Activated CD4-positive, alpha-beta memory T cell treated with anti-CD3 and anti-CD28 coated beads, Interleukin-2, amount 10 ng/mL, durations not matched to agents 7 days and 5 days (primary cell): ENCODE measurements at regions of chr10 and their contacts with region 1.

Region 1: DNA sequence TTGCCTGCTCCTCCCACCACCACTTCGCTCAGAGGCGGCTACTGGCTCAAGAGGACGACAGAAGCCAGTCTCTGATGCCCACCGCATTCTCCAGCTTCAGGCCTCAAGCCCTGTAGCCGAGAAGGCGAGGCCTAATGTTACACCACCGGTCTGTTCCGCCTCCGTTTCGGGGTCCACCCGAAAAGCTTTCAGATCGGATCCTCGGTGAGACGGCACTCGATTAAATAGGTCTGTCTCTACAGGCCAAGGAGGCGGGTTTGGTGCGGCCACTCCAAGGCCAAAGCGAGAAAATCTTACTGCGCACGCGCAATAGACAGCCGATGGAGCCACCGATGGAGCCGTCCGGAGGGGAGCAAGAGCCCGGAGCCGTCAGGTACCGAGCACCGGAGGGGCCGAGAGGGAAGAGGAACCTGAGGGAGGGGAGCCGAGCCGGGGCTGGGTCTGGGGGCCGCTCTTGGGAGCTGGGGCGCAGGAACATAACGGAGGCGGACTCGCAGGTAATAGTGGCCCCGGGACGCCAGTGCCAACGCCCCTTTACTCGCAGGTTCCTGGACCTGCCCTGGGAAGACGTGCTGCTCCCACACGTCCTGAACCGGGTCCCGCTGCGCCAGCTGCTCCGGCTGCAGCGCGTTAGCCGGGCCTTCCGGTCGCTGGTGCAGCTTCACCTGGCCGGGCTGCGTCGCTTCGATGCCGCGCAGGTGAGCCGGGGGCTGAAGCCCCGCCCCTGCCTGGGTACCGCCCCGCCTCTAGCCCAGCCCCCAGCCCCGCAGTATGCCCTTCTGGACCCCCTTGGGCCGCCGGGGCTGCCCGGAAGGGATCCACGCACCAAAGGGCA is at the start of gene FBXL15:
- DNase-seq: peak; percentile 97
- H3K4me3 Mint-ChIP-seq: peak within 1 kb of the TSS; percentile 87
- H3K27ac Mint-ChIP-seq: peak within 1 kb of the TSS; percentile 90
- H3K4me1 Mint-ChIP-seq: peaks cover 40% of the 10 kb centered on the region
- H3K27me3 Mint-ChIP-seq: peaks cover 18% of the 10 kb centered on the region
- total RNA-seq, gene FBXL15: 13.5 to 14.3 TPM

Region 2: DNA sequence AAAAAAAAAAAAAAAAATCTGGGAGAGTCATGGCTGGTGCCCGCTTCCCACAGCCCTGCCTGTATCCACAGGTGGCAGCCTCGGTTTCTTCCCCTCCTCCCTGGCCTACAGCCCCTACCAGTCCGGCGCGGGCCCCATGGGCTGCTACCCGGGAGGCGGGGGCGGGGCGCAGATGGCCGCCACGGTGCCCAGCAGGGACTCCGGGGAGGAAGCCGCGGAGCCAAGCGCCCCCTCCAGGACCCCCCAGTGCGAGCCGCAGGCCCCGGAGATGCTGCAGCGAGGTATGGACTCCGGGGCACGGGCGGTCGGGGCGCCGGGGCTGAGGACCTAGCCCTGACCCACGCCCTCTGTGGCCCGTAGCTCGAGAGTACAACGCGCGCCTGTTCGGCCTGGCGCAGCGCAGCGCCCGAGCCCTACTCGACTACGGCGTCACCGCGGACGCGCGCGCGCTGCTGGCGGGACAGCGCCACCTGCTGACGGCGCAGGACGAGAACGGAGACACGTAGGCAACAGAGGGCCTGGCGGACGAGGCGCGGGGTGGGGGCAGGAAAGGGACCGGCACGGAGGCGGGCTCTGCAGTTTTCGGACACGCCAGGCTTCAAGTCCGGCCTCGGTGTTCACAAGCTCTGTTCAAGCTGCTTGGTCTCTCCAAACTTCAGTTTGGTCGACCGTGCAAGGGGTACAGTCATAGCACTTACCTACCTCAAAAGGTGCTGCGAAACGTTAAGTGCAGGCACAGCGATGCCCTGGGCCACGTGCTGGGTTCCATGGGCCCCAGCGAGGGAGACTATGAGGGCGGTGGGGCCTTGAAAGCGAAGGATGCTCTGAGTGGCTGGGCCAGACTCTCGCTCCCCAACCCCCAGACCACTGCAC is 21.6 kb before region 1 on chr10:
- CTCF ChIA-PET with region 1: interaction called, 25 read pairs
- POLR2A ChIA-PET with region 1: interaction called, 32 read pairs
- DNase-seq: peak; percentile 91
- H3K4me3 Mint-ChIP-seq: peak overlapping the region; percentile 66
- H3K27ac Mint-ChIP-seq: peak overlapping the region; percentile 63
- H3K4me1 Mint-ChIP-seq: peaks cover 45% of the 10 kb centered on the region
- H3K27me3 Mint-ChIP-seq: no peaks in the 10 kb centered on the region

Region 3: GRCh38 chr10:102432162-102432950 is 11.3 kb after region 1 on chr10 and contains the start of gene CUEDC2:
- CTCF ChIA-PET with region 1: interaction called, 40 read pairs
- POLR2A ChIA-PET with region 1: interaction called, 80 read pairs
- DNase-seq: peak; percentile 98
- H3K4me3 Mint-ChIP-seq: peak within 1 kb of the TSS; percentile 88
- H3K27ac Mint-ChIP-seq: peak within 1 kb of the TSS; percentile 82
- H3K4me1 Mint-ChIP-seq: peaks cover 55% of the 10 kb centered on the region
- H3K27me3 Mint-ChIP-seq: no peaks in the 10 kb centered on the region
- total RNA-seq, gene CUEDC2: 60.9 to 64.5 TPM

Region 4: GRCh38 chr10:102461187-102462054 is 40.4 kb after region 1 on chr10:
- CTCF ChIA-PET with region 1: interaction called, 4 read pairs
- POLR2A ChIA-PET with region 1: interaction called, 18 read pairs
- DNase-seq: peak; percentile 93
- H3K4me3 Mint-ChIP-seq: peak overlapping the region; percentile 84
- H3K27ac Mint-ChIP-seq: peak overlapping the region; percentile 60
- H3K4me1 Mint-ChIP-seq: peaks cover 31% of the 10 kb centered on the region
- H3K27me3 Mint-ChIP-seq: no peaks in the 10 kb centered on the region

Region 5: GRCh38 chr10:102503281-102504220 is 82.5 kb after region 1 on chr10 and contains the start of gene SUFU:
- CTCF ChIA-PET with region 1: interaction called, 17 read pairs
- POLR2A ChIA-PET with region 1: interaction called, 21 read pairs
- DNase-seq: peak; percentile 99
- H3K4me3 Mint-ChIP-seq: no peak within 1 kb of the TSS
- H3K27ac Mint-ChIP-seq: peak within 1 kb of the TSS; percentile 73
- H3K4me1 Mint-ChIP-seq: peaks cover 41% of the 10 kb centered on the region
- H3K27me3 Mint-ChIP-seq: no peaks in the 10 kb centered on the region
- total RNA-seq, gene SUFU: 18.0 to 19.6 TPM